CD8-positive, alpha-beta T cell (primary cell): ENCODE measurements at regions of chr9 and their contacts with region 1.

Region 1: DNA sequence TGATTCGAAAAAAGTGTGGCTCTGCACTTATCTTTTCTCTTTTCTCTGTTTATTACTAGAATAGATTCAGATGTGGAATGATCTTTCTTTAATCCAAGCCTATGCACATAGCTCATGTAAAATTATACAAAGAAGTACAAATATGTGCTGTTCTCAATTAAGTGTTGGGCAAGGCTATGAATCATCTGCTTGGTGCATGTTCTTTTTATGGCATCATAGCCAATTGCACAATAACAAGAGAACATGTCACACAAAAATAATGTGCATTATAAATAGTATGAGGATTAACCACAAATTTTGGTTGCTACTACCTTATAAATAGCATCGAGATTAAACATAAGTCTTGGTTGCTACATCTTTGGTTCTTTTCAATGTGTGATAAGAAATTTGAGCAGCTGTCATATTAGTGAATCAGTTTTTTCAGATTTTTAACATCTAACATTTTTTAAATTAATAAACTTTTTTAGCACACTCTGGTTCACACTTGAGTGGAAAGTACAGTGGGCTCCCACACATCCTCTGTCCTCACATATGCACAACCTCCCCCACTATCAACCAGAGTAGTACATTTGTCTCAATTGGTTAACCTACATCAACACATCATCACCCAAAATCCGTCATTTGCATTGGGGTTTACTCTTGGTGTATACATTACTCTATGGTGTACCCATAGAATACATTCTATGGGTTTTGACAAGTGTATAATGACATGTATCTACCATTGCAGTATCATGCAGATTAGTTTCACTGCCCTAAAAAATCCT is 6.8 kb upstream of the RECK start:
- DNase-seq: peak in 1 of 9 experiments; percentile 16
- ATAC-seq: no peak
- H3K4me3 ChIP-seq: no peak overlapping the region
- H3K4me3 Mint-ChIP-seq: no peak overlapping the region
- H3K27ac ChIP-seq: no peak overlapping the region
- H3K27ac Mint-ChIP-seq: no peak overlapping the region
- H3K4me1 ChIP-seq: no peaks in the 10 kb centered on the region
- H3K4me1 Mint-ChIP-seq: no peaks in the 10 kb centered on the region
- H3K27me3 ChIP-seq: no peaks in the 10 kb centered on the region
- H3K27me3 Mint-ChIP-seq: peaks cover 3% of the 10 kb centered on the region
- CTCF ChIP-seq: no peak

Region 2: GRCh38 chr9:36008774-36009300 is 21.1 kb before region 1 on chr9:
- CTCF ChIA-PET with region 1: interaction called, 56 read pairs
- POLR2A ChIA-PET with region 1: no interaction called
- intact Hi-C with region 1: no loop called
- DNase-seq: peak; percentile 8 to 83 (median 68)
- ATAC-seq: peak; percentile 99
- H3K4me3 ChIP-seq: no peak overlapping the region
- H3K4me3 Mint-ChIP-seq: no peak overlapping the region
- H3K27ac ChIP-seq: no peak overlapping the region
- H3K27ac Mint-ChIP-seq: no peak overlapping the region
- H3K4me1 ChIP-seq: no peaks in the 10 kb centered on the region
- H3K4me1 Mint-ChIP-seq: peaks cover 6% of the 10 kb centered on the region
- H3K27me3 ChIP-seq: peaks cover 0 to 6% of the 10 kb centered on the region in 2 experiments
- H3K27me3 Mint-ChIP-seq: peaks cover 31% of the 10 kb centered on the region
- CTCF ChIP-seq: peak; percentile 100